Body of pancreas (tissue), 4 donors: ENCODE measurements at regions of chr3 and their contacts with region 1.

Region 1: DNA sequence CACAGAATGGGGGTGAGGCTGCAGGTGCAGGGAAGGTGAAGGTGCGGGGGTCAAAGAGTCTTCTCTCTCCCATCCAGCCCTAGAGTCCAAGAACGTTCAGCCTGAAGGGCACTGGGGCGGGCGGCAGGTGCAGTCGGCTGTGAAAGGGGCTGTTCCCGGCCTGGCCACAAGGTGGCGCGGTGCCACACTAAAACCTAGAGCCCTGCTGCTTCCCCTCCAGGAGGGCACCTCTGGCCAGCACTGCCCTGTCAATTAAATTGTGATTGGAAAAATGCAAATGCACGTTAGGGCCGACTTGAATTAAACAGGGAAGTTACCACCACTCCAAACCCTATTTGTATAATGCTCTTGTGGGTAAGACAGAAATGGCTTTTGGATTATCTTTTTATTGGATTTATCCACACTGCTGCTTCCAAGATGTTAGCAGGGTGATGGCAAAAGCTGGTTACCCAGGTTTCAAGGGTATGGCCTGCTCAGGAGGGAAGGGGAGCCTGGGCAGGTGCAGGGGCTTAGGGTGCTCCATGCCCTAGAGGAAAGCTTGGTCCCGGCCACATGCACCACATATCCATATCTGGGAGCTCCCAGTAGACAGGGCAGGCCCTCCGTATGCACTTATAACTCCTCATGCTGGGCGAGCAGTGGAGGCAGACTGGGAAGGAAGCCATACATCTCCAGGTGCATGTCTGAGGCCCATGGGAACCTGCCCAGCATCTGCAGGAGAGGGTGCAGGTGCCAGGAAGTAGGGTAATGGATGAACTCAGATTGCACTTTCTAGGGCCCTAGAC is 119.8 kb downstream of the ADCY5 start:
- DNase-seq: peak; percentile 79 to 89 (median 84)
- ATAC-seq: peak; percentile 81
- H3K4me3 ChIP-seq: no peak overlapping the region
- H3K27ac ChIP-seq: peak overlapping the region in 2 of 4 donors; percentile 19 to 51
- H3K4me1 ChIP-seq: peaks cover 27% of the 10 kb centered on the region
- H3K27me3 ChIP-seq: no peaks in the 10 kb centered on the region
- CTCF ChIP-seq: peak; percentile 90 to 97 (median 93)
- POLR2A ChIP-seq: no peak

Region 2: GRCh38 chr3:123375014-123375940 is 46.2 kb after region 1 on chr3:
- intact Hi-C with region 1: no loop called
- DNase-seq: peak in 1 of 4 donors; percentile 6
- ATAC-seq: no peak
- H3K4me3 ChIP-seq: no peak overlapping the region
- H3K27ac ChIP-seq: peak overlapping the region in 2 of 4 donors; percentile 9 to 34
- H3K4me1 ChIP-seq: peaks cover 25% of the 10 kb centered on the region
- H3K27me3 ChIP-seq: no peaks in the 10 kb centered on the region
- CTCF ChIP-seq: peak in 1 of 7 experiments; percentile 10
- POLR2A ChIP-seq: no peak

Region 3: DNA sequence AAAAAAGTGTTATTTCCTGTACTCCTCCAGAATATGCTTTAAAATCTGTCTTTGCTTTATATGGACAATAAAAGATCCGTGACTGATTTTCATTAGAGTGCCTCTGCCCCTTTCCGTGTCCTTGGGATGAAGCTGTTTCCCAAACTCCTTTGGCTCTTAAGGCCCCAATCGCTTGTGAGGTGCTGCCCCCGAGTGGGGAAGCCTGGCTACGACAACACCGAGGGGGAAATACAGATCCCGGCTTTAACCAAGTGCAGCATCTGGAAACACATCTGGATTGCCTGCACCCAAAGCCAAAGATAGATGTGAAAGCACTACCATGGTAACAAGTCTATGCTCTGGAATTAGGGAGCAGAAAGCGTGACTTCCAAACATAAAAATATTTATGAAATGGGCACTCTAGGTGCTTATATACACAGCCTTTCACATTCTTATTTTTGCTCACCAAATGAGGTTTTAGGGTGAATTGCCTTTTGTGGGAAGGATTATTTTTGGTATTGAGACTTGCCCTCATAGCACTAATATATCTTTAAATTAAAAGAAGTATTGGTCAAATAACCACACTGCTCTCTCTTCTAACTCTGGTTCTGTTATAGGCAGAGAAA is 160.5 kb after region 1 on chr3:
- intact Hi-C with region 1: loop called (anchors 5 kb)
- DNase-seq: peak; percentile 62 to 70 (median 64)
- ATAC-seq: peak; percentile 84
- H3K4me3 ChIP-seq: no peak overlapping the region
- H3K27ac ChIP-seq: no peak overlapping the region
- H3K4me1 ChIP-seq: no peaks in the 10 kb centered on the region
- H3K27me3 ChIP-seq: no peaks in the 10 kb centered on the region
- CTCF ChIP-seq: peak; percentile 63 to 88 (median 81)
- POLR2A ChIP-seq: no peak

Region 4: GRCh38 chr3:123568034-123568433 is 239.0 kb after region 1 on chr3:
- intact Hi-C with region 1: loop called (anchors 10 kb)
- DNase-seq: no peak
- ATAC-seq: no peak
- H3K4me3 ChIP-seq: no peak overlapping the region
- H3K27ac ChIP-seq: no peak overlapping the region
- H3K4me1 ChIP-seq: peaks cover 9% of the 10 kb centered on the region
- H3K27me3 ChIP-seq: no peaks in the 10 kb centered on the region
- CTCF ChIP-seq: no peak
- POLR2A ChIP-seq: no peak